ENCODE measurements at regions of chr3 and their contacts with region 1.

Region 1: DNA sequence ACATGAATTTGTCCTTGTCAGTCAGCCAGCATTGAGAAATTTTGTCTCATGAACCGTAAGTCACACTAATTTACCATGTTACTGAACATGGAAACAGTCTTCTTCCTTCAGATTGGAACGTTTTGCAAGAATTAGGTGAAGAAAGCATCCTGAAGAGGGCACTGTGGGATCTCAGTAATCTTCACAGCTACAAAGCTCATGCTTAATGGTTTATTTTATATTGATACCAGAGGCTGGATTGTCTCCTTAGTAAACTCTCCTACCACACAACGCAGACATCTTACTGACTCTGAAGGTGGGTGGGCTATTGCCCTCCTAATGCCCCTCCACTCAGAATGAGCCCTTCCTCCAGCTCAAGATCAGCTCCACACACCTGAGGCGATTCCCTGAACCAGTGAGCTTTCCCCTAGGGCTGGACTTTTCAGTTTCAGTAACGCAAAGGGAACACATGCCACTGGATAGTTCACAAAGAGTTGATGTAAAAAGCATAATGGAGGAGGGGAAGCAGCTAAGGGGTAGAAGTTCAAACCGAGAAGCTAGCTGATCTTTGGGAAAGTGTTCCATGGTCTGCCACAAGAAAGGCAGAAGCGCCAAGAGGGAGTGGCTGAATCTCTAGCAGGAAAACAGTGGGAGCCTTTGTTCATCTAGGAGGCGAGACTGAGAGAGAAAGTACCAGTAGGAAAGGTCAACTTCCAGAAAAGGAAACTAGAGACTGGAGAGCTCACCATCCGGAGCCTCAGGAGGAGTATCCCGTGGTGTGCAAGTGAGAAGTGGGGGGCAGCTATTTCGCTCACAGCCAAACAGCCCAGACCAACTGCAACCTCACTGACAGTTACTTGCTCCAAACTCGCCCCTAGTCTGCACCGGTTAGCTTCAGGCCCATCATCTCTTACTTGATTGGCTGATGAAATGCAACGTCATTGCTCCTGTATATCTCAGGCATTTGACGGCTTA is at the start of gene SLC9C1:
- DNase-seq: no peak
- H3K4me3 ChIP-seq: peak within 1 kb of the TSS; percentile 31
- CTCF ChIP-seq: peak; percentile 66

Region 2: DNA sequence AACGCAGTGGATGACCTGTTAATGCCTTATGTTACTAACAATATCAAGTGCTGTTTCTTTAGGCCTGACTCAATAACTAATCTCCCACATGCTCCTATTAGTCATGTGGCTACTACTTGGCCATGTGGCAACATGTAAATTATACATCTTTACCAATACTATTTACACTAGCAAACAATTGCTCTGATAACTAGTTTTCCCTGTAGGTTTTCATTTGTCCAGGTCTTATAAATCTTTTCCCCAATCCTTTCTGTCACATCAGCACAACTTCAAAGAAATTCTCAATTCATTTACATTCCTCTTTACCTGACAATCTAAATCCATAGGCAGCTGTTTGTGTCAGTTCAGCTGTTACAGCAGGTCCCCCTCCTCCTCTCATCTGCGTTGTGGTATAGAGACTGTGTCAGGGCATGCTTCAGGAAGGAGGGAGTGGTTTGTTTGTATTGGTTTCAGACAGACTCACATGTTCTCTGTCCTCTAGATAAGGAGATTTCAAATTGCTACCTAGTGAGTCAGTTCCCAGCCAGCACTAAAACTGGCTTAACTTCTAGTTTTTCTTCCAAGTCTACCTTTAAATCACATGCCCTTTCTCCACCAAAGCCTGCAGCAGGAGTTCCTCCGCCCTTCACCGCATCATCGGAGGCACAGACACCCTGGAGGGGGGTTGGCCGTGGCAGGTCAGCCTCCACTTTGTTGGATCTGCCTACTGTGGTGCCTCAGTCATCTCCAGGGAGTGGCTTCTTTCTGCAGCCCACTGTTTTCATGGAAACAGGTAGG is 218.7 kb before region 1 on chr3:
- CTCF ChIA-PET with region 1: no interaction called
- POLR2A ChIA-PET with region 1: no interaction called
- DNase-seq: peak; percentile 80
- H3K4me3 ChIP-seq: peak overlapping the region; percentile 10; the same call in 1 of the 2 replicates
- CTCF ChIP-seq: no peak

Region 3: DNA sequence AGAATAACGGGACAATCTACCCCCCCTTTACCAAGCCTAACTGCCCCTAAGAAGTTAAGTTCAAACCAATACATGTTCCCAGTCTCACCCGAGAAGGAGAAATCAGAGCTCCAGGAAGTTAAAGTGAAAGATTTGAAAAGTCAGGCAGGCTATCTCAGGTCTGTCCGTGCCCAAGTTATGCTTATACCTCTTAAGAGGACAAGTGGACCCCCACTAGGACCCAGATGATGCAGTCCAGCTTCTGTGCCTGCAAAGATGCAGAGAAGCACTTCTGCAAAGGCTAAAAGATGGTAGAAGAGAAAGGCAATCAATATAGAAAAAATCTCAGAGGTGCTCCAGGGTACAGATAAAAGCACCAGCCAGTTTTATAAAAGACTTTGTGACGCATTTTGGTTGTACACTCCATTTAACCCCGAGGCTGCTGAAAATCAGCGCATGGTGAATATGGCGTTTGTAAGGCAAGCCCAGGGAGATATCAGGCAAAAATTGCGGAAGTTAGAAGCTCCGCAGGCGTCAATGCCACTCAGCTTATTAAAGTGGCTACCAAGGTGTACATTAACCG is 10.2 kb after region 1 on chr3:
- CTCF ChIA-PET with region 1: interaction called, 51 read pairs
- POLR2A ChIA-PET with region 1: no interaction called
- DNase-seq: no peak
- H3K4me3 ChIP-seq: peak overlapping the region; percentile 54
- CTCF ChIP-seq: no peak

Region 4: DNA sequence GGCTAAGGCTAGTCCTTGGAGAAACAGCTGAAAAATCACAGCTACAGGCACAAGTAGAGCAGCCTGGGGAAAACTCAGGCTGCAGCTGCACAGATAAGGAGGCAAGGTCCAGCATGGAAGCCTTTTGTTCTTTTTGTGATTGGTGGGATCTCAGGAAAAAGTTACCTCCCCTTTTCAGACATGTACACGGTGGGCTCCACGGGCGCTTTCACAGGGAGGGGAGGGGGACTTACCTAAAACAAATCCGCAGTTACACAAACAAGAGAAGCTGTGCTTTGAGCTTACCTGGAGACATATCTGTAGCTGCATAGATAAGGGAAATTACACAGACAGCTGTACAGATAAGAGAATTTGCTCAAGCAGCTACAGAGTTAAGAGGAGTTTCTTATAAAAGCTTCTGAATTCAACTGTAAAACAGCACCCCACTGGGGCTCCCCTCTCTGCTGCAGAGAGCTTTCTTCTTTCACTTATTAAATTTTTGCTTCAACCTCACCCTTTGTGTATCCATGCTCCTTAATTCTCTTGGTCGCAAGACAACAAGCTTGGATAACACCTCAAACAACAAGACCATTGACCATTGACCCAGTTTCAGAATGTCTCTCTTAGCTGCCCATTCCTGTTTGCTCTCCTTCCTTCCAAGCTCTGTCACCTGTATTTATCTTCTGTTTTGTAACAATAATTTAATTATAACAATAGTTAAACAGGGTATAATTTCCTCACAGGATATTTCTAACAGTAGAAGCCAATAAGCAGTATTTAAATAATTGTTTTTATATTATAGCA is 28.4 kb after region 1 on chr3:
- CTCF ChIA-PET with region 1: interaction called, 11 read pairs
- POLR2A ChIA-PET with region 1: no interaction called
- DNase-seq: no peak
- H3K4me3 ChIP-seq: no peak overlapping the region
- CTCF ChIP-seq: no peak

Region 5: DNA sequence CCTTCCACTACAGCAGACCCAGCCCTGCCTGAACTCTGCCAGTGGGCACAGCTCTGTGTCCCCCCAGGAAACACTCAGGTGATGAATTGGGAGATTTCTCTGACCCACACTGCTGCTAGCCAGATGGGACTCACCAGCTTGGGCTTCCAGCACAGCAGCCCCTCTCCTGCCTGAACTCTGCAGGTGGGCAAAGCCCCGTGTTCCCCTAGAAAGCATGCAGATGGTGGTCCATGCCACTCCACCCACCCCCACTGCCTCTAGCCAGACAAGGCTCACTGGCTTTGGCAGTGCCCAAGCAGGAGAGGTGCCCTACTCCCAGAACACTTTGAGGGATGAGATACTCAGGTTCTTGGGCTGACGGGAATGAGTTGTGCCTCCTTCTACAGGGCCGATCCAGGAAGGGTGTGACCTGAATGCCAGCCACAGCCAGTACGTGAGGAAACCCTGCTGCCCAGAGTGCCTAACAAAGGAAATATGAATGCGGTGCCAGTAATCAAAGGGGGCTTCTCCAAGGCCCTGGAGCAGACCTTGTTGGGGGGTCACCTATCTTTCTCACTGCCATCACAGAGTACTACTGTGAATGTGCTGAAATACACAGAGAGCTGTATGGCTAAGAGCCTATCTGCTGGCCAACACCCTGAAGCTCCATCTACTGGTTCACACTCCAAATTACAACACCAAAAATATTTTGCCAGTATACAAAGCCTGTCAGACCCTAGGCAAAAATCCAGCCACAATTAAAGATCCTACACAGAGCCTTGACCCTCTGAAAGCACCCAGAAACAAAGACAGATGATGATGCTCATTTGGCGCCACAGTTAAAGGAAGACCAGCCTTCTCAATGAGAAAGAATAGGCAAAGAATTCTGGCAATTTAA is 143.7 kb after region 1 on chr3:
- CTCF ChIA-PET with region 1: interaction called, 20 read pairs
- POLR2A ChIA-PET with region 1: no interaction called
- DNase-seq: no peak
- H3K4me3 ChIP-seq: no peak overlapping the region
- CTCF ChIP-seq: peak; percentile 27

Region 6: DNA sequence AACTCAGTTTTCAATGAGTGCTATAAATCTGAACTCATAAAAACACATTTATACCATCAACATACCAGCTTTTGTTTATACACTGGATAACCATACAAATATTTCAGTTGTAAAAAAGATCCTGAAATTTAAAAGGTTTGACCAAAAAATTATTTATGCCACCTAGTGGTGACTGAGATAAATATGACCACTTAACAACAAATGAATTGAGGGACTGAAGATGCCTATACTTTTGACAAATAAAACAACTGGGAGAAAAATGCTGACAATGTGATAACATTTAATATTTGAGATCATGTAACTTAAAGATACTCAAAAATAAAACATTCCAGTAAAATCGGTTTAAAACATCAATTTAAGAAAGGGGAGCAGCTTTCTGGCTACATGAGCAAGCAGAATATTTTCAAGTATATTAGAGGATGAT is 237.7 kb after region 1 on chr3:
- CTCF ChIA-PET with region 1: interaction called, 33 read pairs
- POLR2A ChIA-PET with region 1: no interaction called
- DNase-seq: no peak
- H3K4me3 ChIP-seq: no peak overlapping the region
- CTCF ChIP-seq: no peak